ENCODE measurements at regions of chr3 and their contacts with region 1.

Region 1: GRCh38 chr3:66816090-66816761 is 181.9 kb upstream of the KBTBD8 start:
- DNase-seq: peak in 5 of 35 experiments; percentile 1 to 62 (median 2)
- ATAC-seq: peak; percentile 51 to 76 (median 68)
- H3K4me3 ChIP-seq: no peak overlapping the region
- H3K4me3 Mint-ChIP-seq: no peak overlapping the region
- H3K27ac ChIP-seq: no peak overlapping the region
- H3K27ac Mint-ChIP-seq: no peak overlapping the region
- H3K4me1 ChIP-seq: no peaks in the 10 kb centered on the region
- H3K4me1 Mint-ChIP-seq: no peaks in the 10 kb centered on the region
- H3K27me3 ChIP-seq: peaks cover 0 to 3% of the 10 kb centered on the region in 2 experiments
- H3K27me3 Mint-ChIP-seq: peaks cover 5% of the 10 kb centered on the region in 2 donors

Region 2: DNA sequence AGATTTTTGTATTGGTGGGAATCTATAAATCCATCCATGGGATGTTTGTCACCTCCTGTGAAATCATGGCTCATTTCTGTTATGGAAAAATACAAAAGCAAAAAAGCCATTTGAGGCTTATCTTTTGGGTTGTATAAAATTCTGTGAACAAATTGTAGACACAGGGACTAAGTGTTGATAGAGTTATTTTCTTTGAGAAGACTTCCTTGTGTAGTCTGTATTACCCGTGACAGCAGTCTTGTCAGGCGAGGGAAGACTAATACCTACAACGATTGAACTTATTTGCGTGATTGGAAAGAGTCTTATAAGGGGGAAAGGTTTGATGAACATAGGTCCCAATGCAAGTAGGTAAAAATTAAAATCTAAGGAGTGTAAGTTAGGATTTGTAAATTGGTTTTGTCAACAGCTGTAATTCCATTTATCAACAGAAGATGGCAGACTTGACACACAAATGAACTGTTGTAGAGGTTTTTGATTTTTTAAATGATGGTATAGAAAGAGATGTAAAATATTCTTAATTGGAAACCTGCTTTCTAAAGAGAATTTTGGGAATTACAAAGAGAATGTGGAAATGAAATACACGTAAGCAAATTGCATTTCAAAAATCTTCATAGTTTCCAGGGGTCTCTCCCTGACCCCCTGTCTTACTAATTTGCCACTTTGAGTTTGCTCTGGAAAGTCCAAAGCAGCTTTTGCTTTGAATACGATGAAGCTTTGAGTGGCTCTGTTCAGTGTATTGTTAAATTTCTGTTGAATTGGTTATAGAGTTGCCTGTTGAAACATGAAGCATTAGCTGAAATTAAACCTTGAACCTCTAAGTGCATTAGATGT is 562.2 kb before region 1 on chr3:
- CTCF ChIA-PET with region 1: interaction called, 39 to 67 read pairs
- POLR2A ChIA-PET with region 1: interaction called in 1 of 2 experiments, 5 read pairs
- DNase-seq: peak in 2 of 35 experiments; percentile 13 to 65
- ATAC-seq: no peak
- H3K4me3 ChIP-seq: no peak overlapping the region
- H3K4me3 Mint-ChIP-seq: no peak overlapping the region
- H3K27ac ChIP-seq: no peak overlapping the region
- H3K27ac Mint-ChIP-seq: no peak overlapping the region
- H3K4me1 ChIP-seq: no peaks in the 10 kb centered on the region
- H3K4me1 Mint-ChIP-seq: no peaks in the 10 kb centered on the region
- H3K27me3 ChIP-seq: no peaks in the 10 kb centered on the region
- H3K27me3 Mint-ChIP-seq: no peaks in the 10 kb centered on the region

Region 3: DNA sequence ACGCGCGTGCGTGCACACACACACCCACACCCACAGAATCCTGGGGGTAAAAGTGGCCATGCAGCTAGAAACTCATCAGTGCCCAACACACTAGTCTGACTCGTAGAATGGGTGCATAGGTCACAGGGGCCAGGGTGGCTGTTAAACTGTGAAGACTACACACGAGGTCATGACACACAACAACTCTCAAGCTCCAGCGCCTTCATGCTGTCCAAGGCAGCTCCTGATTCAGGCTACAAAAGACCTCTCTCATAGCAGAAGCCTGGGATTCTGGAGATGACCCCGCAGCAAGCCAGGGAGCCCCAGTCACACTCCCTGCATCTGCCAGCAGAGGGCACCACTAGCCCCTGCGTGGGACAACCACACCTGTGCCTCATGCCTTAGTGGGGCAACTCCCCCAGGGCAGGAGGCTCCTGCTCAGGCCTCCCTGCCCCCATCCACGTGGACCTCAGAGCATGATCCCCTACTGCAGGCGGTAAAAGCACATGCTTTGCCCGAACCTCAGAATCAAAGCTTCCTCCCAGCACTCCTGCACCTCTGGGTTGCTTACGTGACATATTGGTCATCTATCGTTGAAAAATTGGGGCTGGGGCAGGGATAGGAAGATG is 408.5 kb before region 1 on chr3:
- CTCF ChIA-PET with region 1: interaction called, 6 to 13 read pairs
- POLR2A ChIA-PET with region 1: no interaction called
- DNase-seq: peak; percentile 29 to 80 (median 67)
- ATAC-seq: peak; percentile 75 to 85 (median 80)
- H3K4me3 ChIP-seq: no peak overlapping the region
- H3K4me3 Mint-ChIP-seq: no peak overlapping the region
- H3K27ac ChIP-seq: no peak overlapping the region
- H3K27ac Mint-ChIP-seq: peak overlapping the region in 1 of 2 donors; percentile 15
- H3K4me1 ChIP-seq: peaks cover 0 to 8% of the 10 kb centered on the region in 2 experiments
- H3K4me1 Mint-ChIP-seq: peaks cover 0 to 3% (median 3%) of the 10 kb centered on the region in 3 donors
- H3K27me3 ChIP-seq: no peaks in the 10 kb centered on the region
- H3K27me3 Mint-ChIP-seq: no peaks in the 10 kb centered on the region

Region 4: GRCh38 chr3:67437086-67437485 is 620.9 kb after region 1 on chr3:
- CTCF ChIA-PET with region 1: no interaction called
- POLR2A ChIA-PET with region 1: no interaction called
- DNase-seq: no peak
- ATAC-seq: no peak
- H3K4me3 ChIP-seq: no peak overlapping the region
- H3K4me3 Mint-ChIP-seq: no peak overlapping the region
- H3K27ac ChIP-seq: no peak overlapping the region
- H3K27ac Mint-ChIP-seq: no peak overlapping the region
- H3K4me1 ChIP-seq: no peaks in the 10 kb centered on the region
- H3K4me1 Mint-ChIP-seq: peaks cover 20 to 28% (median 26%) of the 10 kb centered on the region in 3 donors
- H3K27me3 ChIP-seq: no peaks in the 10 kb centered on the region
- H3K27me3 Mint-ChIP-seq: no peaks in the 10 kb centered on the region

Region 5: GRCh38 chr3:68220832-68221231 is 1404.6 kb after region 1 on chr3:
- CTCF ChIA-PET with region 1: no interaction called
- POLR2A ChIA-PET with region 1: no interaction called
- DNase-seq: no peak
- ATAC-seq: no peak
- H3K4me3 ChIP-seq: no peak overlapping the region
- H3K4me3 Mint-ChIP-seq: no peak overlapping the region
- H3K27ac ChIP-seq: no peak overlapping the region
- H3K27ac Mint-ChIP-seq: peak overlapping the region in 1 of 2 donors; percentile 9
- H3K4me1 ChIP-seq: no peaks in the 10 kb centered on the region
- H3K4me1 Mint-ChIP-seq: peaks cover 9 to 15% (median 11%) of the 10 kb centered on the region in 3 donors
- H3K27me3 ChIP-seq: no peaks in the 10 kb centered on the region
- H3K27me3 Mint-ChIP-seq: no peaks in the 10 kb centered on the region

Measured in T-cell (primary cell).